IMR-90 (cell line): ENCODE measurements at regions of chr6 and their contacts with region 1.

Region 1: DNA sequence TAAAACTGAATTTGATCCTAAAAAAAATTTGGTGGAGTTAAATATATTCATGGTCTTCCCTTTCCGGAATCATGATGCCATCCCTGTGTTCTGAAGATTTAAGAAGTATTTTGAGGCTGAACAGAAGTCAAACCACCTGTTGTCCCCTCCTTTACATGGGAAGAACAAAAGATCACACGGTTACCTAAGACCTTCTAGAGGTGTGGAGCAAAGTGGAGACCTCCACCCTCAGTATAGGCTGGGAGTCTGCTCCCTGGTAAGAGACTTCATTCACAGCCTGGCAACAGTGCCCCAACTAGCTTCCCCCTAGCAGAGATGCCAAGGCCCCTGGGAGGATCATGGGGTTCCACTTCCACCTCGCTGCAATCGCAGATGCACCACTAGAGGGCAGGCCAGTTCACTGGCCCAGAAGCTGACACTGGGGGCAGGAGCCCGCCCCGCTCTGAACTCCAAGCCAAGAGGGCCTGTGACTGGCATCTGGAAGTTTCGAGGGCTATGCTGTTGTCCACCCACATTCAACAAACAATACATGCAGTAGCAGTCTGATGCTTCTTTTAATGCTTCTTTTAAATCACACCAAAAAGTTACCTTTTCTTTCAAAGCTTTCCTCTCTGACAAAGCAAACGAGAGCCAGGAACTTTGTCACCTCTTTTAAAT is 19.5 kb upstream of the UBE2J1 start:
- DNase-seq: peak; percentile 26
- ATAC-seq: peak; percentile 95
- H3K4me3 ChIP-seq: no peak overlapping the region
- H3K27ac ChIP-seq: no peak overlapping the region
- H3K4me1 ChIP-seq: no peaks in the 10 kb centered on the region
- H3K27me3 ChIP-seq: no peaks in the 10 kb centered on the region; the same call in 1 of the 2 replicates
- CTCF ChIP-seq: peak; percentile 73
- POLR2A ChIP-seq: no peak
- RAD21 ChIP-seq: peak; percentile 52

Region 2: GRCh38 chr6:88982720-88983119 is 389.3 kb before region 1 on chr6:
- CTCF ChIA-PET with region 1: interaction called, 11 read pairs
- POLR2A ChIA-PET with region 1: no interaction called
- dilution Hi-C with region 1: no loop called
- in situ Hi-C with region 1: loop called (anchors 25 kb)
- intact Hi-C with region 1: loop called (anchors 1 kb)
- DNase-seq: peak; percentile 79
- ATAC-seq: peak; percentile 93
- H3K4me3 ChIP-seq: no peak overlapping the region
- H3K27ac ChIP-seq: no peak overlapping the region
- H3K4me1 ChIP-seq: no peaks in the 10 kb centered on the region
- H3K27me3 ChIP-seq: peaks cover 3% of the 10 kb centered on the region; the same call in 1 of the 2 replicates
- CTCF ChIP-seq: peak; percentile 92
- POLR2A ChIP-seq: no peak
- RAD21 ChIP-seq: peak; percentile 88

Region 3: GRCh38 chr6:89122625-89123024 is 249.4 kb before region 1 on chr6:
- CTCF ChIA-PET with region 1: interaction called, 6 read pairs
- POLR2A ChIA-PET with region 1: no interaction called
- dilution Hi-C with region 1: no loop called
- in situ Hi-C with region 1: loop called (anchors 25 kb)
- intact Hi-C with region 1: loop called (anchors 1 kb)
- DNase-seq: peak; percentile 52
- ATAC-seq: peak; percentile 85
- H3K4me3 ChIP-seq: no peak overlapping the region
- H3K27ac ChIP-seq: no peak overlapping the region
- H3K4me1 ChIP-seq: no peaks in the 10 kb centered on the region
- H3K27me3 ChIP-seq: peaks cover 8% of the 10 kb centered on the region
- CTCF ChIP-seq: peak; percentile 67
- POLR2A ChIP-seq: no peak
- RAD21 ChIP-seq: peak; percentile 78

Region 4: GRCh38 chr6:89145787-89146646 is 226.0 kb before region 1 on chr6 and contains the start of gene PM20D2:
- CTCF ChIA-PET with region 1: no interaction called
- POLR2A ChIA-PET with region 1: no interaction called
- dilution Hi-C with region 1: no loop called
- in situ Hi-C with region 1: loop called (anchors 25 kb)
- intact Hi-C with region 1: no loop called
- DNase-seq: peak; percentile 20
- ATAC-seq: peak; percentile 71
- H3K4me3 ChIP-seq: peak within 1 kb of the TSS; percentile 78
- H3K27ac ChIP-seq: peak within 1 kb of the TSS; percentile 37; the same call in 1 of the 2 replicates
- H3K4me1 ChIP-seq: peaks cover 3% of the 10 kb centered on the region; the same call in 1 of the 2 replicates
- H3K27me3 ChIP-seq: no peaks in the 10 kb centered on the region
- CTCF ChIP-seq: no peak
- POLR2A ChIP-seq: no peak
- RAD21 ChIP-seq: no peak
- total RNA-seq, gene PM20D2: 6.5 and 11.4 TPM in 2 replicates

Region 5: DNA sequence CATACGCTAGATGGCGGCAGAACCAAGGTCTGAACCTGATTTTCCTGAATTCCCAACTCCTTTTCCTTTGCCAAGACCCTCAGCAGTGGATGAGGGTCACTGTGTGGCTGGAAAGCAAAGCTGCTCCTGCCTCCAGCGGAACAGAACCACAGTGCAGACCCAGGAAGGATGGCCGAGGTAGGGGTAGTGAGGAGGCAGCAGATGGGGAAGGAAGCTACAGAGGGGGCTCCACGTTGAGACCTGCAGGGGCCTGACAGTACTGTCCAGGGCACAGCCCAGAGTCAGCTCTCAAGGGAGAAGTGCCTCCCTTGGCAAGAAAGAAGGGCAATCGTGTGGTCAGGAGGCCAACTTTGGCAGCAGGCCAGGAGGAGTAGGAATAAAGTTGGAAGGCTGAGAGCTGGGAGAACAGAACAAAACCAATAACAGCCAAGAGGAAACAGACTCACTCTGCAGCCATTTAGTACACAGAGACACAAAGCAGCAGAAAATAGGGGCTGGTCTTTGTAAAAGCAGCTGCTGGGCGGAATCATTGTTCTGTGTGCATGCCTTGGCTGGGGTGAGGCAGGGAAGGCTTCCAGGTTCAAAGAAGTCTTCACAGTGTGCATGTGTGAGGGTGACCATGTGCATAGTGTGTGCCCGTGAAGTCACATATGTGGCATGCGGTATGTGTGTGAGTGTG is 60.0 kb before region 1 on chr6:
- CTCF ChIA-PET with region 1: interaction called, 6 read pairs
- POLR2A ChIA-PET with region 1: no interaction called
- dilution Hi-C with region 1: no loop called
- in situ Hi-C with region 1: no loop called
- intact Hi-C with region 1: loop called (anchors 1 kb)
- DNase-seq: peak; percentile 54
- ATAC-seq: peak; percentile 46
- H3K4me3 ChIP-seq: no peak overlapping the region
- H3K27ac ChIP-seq: no peak overlapping the region
- H3K4me1 ChIP-seq: peaks cover 6% of the 10 kb centered on the region; the same call in 1 of the 2 replicates
- H3K27me3 ChIP-seq: peaks cover 11% of the 10 kb centered on the region
- CTCF ChIP-seq: peak; percentile 37
- POLR2A ChIP-seq: no peak
- RAD21 ChIP-seq: peak; percentile 45

Region 6: DNA sequence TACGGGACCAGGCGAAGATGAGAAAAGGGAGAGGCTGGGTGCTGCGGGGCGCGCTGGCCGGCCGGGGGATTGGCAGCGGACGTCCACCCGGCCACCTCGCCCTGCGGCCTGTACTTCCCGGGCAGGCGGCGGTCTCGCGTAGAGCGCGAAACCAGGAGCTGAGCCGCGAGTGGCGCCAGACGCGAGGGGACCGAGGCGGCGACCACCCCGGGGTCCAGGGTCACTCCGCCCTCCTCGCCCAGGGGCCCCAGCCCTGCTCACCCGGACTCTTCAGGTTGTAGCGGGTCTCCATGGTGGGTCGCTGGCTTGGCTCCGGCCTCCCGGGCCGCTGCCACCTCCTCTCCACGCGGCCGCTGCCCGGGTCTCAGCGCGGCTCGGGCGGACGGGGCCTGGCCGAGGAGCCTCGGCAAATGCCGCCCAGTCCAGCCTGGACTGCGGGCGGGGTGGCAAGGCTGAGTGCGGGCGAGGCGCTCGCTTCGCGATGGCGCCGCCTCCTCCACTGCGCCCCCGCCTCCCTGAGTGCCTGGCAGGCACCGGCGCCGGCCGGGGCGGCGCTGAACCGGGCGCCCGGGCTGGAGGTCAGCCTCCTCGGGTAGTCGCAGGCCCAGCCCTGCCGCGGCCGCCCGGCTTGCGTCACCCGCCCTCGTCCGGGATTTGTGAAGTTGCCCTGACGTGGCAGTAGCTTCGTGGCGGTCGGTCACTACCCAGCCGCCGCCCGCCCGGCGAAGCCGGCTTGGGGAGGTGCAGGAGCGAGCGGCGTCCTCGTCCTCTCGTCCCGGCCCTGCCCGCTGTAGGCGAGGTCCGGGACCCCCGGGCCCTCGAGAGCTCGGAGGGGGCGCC is 19.5 kb before region 1 on chr6 and contains the start of gene UBE2J1:
- CTCF ChIA-PET with region 1: interaction called, 8 read pairs
- POLR2A ChIA-PET with region 1: interaction called, 14 read pairs
- dilution Hi-C with region 1: no loop called
- in situ Hi-C with region 1: no loop called
- intact Hi-C with region 1: no loop called
- DNase-seq: peak; percentile 94
- ATAC-seq: peak; percentile 96
- H3K4me3 ChIP-seq: peak within 1 kb of the TSS; percentile 99
- H3K27ac ChIP-seq: peak within 1 kb of the TSS; percentile 85
- H3K4me1 ChIP-seq: peaks cover 9% of the 10 kb centered on the region
- H3K27me3 ChIP-seq: no peaks in the 10 kb centered on the region
- CTCF ChIP-seq: no peak
- POLR2A ChIP-seq: peak; percentile 97
- RAD21 ChIP-seq: no peak
- total RNA-seq, gene UBE2J1: 35.3 and 37.8 TPM in 2 replicates

Region 7: GRCh38 chr6:89610149-89610642 is 238.2 kb after region 1 on chr6:
- CTCF ChIA-PET with region 1: interaction called, 3 read pairs
- POLR2A ChIA-PET with region 1: no interaction called
- dilution Hi-C with region 1: no loop called
- in situ Hi-C with region 1: no loop called
- intact Hi-C with region 1: loop called (anchors 5 kb)
- DNase-seq: peak; percentile 12
- ATAC-seq: peak; percentile 70; the same call in 1 of the 2 replicates
- H3K4me3 ChIP-seq: no peak overlapping the region
- H3K27ac ChIP-seq: no peak overlapping the region
- H3K4me1 ChIP-seq: no peaks in the 10 kb centered on the region
- H3K27me3 ChIP-seq: peaks cover 2% of the 10 kb centered on the region; the same call in 1 of the 2 replicates
- CTCF ChIP-seq: peak; percentile 59
- POLR2A ChIP-seq: no peak
- RAD21 ChIP-seq: peak; percentile 39